GM13976 (cell line): ENCODE measurements at regions of chr1 and their contacts with region 1.

Region 1: GRCh38 chr1:58783993-58784757 is at the start of gene JUN:
- DNase-seq: peak; percentile 98
- CTCF ChIP-seq: no peak

Region 2: GRCh38 chr1:58710190-58711085 is 73.7 kb before region 1 on chr1:
- in situ Hi-C with region 1: no loop called
- DNase-seq: no peak
- CTCF ChIP-seq: no peak

Region 3: DNA sequence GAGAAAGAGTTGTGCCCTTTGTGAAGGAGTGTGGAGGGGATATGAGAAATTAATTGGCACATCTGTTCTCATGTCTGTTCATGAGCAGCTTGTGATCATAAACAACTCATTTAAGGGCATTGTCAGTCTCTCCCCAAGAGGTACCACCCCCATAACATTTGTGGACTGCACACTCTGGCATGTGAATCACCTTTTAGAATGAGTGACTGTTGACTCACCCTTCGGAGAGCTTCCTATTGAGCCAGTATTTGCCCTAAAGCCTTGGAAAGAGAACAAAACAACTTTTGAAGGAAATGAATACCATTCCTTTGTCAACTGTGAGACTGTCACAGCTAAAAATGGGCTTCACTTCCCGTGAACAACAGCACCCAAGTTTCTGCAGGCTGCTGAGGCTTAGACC is 56.8 kb before region 1 on chr1:
- in situ Hi-C with region 1: no loop called
- DNase-seq: no peak
- CTCF ChIP-seq: no peak

Region 4: DNA sequence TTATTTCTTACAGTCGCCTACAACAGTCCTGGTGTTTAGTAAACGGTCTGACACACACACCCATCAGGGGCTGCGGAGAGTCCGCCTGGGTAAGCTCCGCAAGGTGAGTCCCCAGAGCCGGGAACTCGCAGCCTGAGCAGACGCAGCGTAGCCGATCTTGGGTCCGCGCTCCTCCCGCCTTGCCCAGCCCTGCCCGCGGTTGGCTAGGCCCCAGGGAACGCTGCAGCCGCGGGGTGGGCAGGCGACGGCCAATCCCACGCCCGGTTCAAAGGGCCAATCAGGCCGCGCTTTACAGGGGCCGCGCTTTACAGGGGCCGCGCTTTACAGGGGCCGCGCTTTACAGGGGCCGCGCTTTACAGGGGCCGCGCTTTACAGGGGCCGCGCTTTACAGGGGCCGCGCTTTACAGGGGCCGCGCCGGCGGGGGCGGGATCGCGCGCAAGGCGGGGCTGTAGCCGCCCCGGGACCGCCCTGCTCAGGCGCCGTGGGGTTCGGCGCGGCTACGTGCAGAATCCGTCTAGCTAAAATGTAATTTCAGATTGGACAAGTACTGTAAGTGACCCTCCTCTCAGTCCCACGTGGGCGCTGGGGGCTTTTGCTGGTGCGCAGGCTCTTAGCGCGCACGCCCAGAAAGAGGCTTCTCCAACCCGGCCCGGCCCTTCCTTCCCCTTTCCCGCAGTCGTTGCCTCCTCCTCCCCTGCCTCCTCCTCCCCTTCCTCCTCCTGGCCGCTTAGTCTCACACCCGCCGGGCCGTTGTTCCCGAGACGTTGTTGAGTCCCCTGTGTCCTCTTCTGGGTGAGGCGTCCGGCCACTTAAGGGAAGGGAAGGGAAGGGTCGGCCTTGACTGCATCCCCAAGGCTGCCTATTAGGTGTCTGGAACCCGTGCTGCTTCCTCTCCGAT is 512.4 kb after region 1 on chr1 and contains the start of gene FGGY:
- in situ Hi-C with region 1: loop called (anchors 25 kb)
- DNase-seq: peak; percentile 95
- CTCF ChIP-seq: no peak